ENCODE measurements at regions of chr13 and their contacts with region 1.

Region 1: GRCh38 chr13:99436686-99437416 is 64.4 kb upstream of the TM9SF2 start:
- DNase-seq: peak; percentile 91
- H3K4me3 Mint-ChIP-seq: peak overlapping the region; percentile 40
- H3K27ac Mint-ChIP-seq: peak overlapping the region; percentile 56
- H3K4me1 Mint-ChIP-seq: peaks cover 63% of the 10 kb centered on the region
- H3K27me3 Mint-ChIP-seq: peaks cover 24% of the 10 kb centered on the region

Region 2: DNA sequence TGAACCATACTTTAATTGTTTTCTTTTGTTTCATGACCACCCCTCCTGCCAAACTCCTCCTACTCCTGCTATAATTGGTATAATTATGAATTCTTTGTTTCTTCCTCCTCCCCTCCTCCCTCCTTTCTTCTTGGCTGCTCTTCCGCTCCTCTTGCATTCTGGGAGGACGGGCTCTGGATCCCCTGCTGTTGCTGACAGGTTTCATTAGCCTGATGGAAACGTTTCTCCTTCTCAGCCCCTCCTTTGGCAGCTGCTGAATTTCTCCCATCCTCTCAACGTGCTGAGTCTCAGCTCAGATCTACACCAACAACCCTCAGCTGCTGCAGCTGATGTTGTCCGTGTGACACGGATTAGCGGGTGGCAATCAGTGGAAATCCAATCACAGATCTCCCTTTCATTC is 333.3 kb before region 1 on chr13:
- intact Hi-C with region 1: no loop called
- DNase-seq: no peak
- H3K4me3 Mint-ChIP-seq: no peak overlapping the region
- H3K27ac Mint-ChIP-seq: no peak overlapping the region
- H3K4me1 Mint-ChIP-seq: peaks cover 1% of the 10 kb centered on the region
- H3K27me3 Mint-ChIP-seq: peaks cover 15% of the 10 kb centered on the region

Region 3: DNA sequence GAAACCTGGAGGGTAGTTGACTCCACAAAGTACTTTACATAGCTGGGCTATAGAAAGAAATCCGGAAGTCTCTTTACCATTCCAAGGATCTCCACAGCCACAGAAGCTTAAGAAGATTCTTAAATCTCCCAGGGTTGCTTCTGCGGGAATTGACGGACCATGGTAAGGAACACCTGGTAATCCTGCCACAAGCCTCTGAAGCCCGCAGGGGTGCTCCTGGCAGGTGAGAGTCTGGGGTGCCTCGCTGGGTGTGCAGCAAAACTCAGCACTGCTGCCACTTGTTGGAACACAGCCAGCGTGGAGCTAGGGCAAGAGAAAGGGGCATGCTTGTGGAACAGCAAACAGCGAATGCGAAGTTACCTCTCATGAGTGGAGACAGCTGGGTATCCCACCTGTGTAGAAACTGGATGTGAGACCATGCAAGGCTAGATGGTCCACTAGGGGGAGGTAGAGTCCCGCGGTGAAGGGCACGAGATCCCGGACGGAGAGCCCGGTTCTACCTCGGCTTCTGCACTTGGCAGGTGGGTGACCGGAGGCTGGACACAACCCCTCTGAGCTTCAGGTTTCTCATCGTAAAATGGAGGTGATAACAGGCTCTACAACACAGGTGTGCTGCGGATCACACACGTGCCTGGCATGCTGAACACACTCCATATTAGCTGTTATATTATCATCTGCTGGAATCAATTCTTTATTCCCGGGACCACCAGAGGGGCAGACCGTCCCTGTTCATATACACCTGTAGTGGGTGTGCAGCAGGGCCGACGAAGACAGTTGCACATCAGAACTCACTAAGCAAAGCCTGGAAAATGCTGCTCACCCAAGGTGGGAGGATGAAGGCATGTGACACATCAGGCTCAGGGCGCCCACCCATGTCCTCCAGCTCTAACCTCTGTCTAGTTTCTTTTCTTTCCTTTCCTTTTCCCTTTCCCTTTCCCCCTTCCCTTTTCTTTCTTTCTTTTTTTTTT is 260.3 kb before region 1 on chr13:
- intact Hi-C with region 1: loop called (anchors 2 kb)
- DNase-seq: peak; percentile 60
- H3K4me3 Mint-ChIP-seq: no peak overlapping the region
- H3K27ac Mint-ChIP-seq: peak overlapping the region; percentile 24
- H3K4me1 Mint-ChIP-seq: peaks cover 17% of the 10 kb centered on the region
- H3K27me3 Mint-ChIP-seq: peaks cover 4% of the 10 kb centered on the region

Region 4: GRCh38 chr13:99296398-99296797 is 140.5 kb before region 1 on chr13:
- intact Hi-C with region 1: loop called (anchors 2 kb)
- DNase-seq: no peak
- H3K4me3 Mint-ChIP-seq: peak overlapping the region; percentile 73
- H3K27ac Mint-ChIP-seq: peak overlapping the region; percentile 87
- H3K4me1 Mint-ChIP-seq: peaks cover 74% of the 10 kb centered on the region
- H3K27me3 Mint-ChIP-seq: no peaks in the 10 kb centered on the region

Region 5: GRCh38 chr13:99322297-99323103 is 114.4 kb before region 1 on chr13:
- intact Hi-C with region 1: loop called (anchors 1 kb)
- DNase-seq: peak; percentile 44
- H3K4me3 Mint-ChIP-seq: peak overlapping the region; percentile 31
- H3K27ac Mint-ChIP-seq: peak overlapping the region; percentile 96
- H3K4me1 Mint-ChIP-seq: peaks cover 60% of the 10 kb centered on the region
- H3K27me3 Mint-ChIP-seq: no peaks in the 10 kb centered on the region

Region 6: GRCh38 chr13:99406799-99407201 is 30.1 kb before region 1 on chr13:
- intact Hi-C with region 1: loop called (anchors 1 kb)
- DNase-seq: no peak
- H3K4me3 Mint-ChIP-seq: no peak overlapping the region
- H3K27ac Mint-ChIP-seq: no peak overlapping the region
- H3K4me1 Mint-ChIP-seq: peaks cover 33% of the 10 kb centered on the region
- H3K27me3 Mint-ChIP-seq: no peaks in the 10 kb centered on the region

Region 7: DNA sequence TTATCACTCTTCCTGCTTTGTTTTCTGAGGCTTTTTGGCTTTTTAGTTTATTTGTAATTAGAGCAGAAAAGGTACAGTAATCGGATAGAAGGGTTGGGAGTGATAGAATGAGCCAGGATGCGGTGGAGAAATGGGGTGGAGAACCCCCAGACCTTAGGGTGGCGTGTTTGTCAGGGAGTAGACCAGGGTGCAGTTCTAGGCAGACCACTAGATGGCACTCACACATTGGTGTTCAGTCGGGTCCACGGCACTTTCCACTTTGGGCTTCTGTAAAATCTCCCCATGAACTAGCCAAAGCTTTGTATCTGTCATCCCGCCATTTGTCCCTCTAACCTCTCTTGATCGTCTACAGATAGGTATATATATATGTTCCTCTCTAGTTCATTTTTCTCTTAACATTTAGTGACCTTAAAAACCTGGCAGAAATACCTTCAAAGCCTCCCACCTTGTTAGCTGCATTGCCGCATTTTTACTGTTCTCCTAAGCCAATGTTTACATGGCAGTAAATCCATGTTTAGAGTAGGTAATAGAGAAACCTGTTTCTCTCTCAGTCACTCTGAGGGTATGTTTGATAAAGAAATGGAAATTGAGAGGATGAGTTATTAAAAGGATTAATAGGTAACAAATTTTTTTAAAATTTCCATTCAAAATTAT is 219.4 kb after region 1 on chr13:
- intact Hi-C with region 1: loop called (anchors 5 kb)
- DNase-seq: peak; percentile 71
- H3K4me3 Mint-ChIP-seq: peak overlapping the region; percentile 9
- H3K27ac Mint-ChIP-seq: no peak overlapping the region
- H3K4me1 Mint-ChIP-seq: peaks cover 38% of the 10 kb centered on the region
- H3K27me3 Mint-ChIP-seq: peaks cover 46% of the 10 kb centered on the region